Tibial artery (tissue), 4 donors: ENCODE measurements at regions of chr5 and their contacts with region 1.

Region 1: GRCh38 chr5:181207214-181208107 is 2.5 kb upstream of the TRIM7 start:
- DNase-seq: peak; percentile 77 to 90
- H3K4me3 ChIP-seq: peak overlapping the region; percentile 69 to 84
- H3K27ac ChIP-seq: peak overlapping the region; percentile 86 to 91
- H3K4me1 ChIP-seq: peaks cover 0 to 27% (median 23%) of the 10 kb centered on the region in 4 donors
- H3K27me3 ChIP-seq: no peaks in the 10 kb centered on the region
- CTCF ChIP-seq: no peak

Region 2: DNA sequence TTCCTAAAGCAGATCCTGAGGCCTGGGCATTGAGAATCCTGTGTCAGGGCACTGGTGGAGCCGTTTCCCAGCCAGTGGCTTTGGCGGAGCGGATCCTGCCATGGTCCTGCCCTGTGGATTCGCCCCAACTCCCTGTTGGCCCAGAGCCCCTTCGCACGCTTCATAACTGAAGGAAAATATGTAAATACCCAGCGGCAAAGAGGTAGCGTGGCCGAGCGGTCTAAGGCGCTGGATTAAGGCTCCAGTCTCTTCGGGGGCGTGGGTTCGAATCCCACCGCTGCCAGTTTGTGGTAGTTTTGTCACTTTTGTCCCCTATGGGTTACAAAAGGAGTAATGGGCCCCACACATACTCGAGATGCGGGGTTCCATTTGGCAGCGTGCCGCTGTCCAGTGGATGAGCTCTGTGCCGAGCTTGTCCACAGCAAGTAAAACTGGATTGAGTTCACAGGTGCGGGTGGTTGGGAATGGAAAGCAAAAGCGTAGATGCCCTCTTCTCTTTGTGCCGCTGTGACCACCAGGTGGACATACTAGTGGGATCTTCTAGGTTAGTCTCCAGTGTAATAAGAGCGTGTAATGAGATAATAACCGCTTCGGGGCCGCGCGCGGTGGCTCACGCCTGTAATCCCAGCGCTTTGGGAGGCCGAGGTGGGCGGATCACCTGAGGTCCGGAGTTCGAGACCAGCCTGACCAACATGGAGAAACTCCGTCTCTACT is 19.8 kb before region 1 on chr5:
- intact Hi-C with region 1: loop called (anchors 2 kb)
- DNase-seq: peak; percentile 78 to 89
- H3K4me3 ChIP-seq: peak overlapping the region; percentile 93 to 96
- H3K27ac ChIP-seq: peak overlapping the region; percentile 93 to 96
- H3K4me1 ChIP-seq: peaks cover 0 to 22% (median 21%) of the 10 kb centered on the region in 4 donors
- H3K27me3 ChIP-seq: no peaks in the 10 kb centered on the region
- CTCF ChIP-seq: peak in 1 of 2 experiments; percentile 18

Region 3: GRCh38 chr5:181217803-181218062 is 10.3 kb after region 1 on chr5:
- intact Hi-C with region 1: loop called (anchors 2 kb)
- DNase-seq: no peak
- H3K4me3 ChIP-seq: peak overlapping the region; percentile 51 to 61
- H3K27ac ChIP-seq: peak overlapping the region; percentile 69 to 75
- H3K4me1 ChIP-seq: peaks cover 0 to 29% (median 8%) of the 10 kb centered on the region in 4 donors
- H3K27me3 ChIP-seq: no peaks in the 10 kb centered on the region
- CTCF ChIP-seq: no peak